Aorta (tissue), 5 donors: ENCODE measurements at regions of chr3 and their contacts with region 1.

Region 1: DNA sequence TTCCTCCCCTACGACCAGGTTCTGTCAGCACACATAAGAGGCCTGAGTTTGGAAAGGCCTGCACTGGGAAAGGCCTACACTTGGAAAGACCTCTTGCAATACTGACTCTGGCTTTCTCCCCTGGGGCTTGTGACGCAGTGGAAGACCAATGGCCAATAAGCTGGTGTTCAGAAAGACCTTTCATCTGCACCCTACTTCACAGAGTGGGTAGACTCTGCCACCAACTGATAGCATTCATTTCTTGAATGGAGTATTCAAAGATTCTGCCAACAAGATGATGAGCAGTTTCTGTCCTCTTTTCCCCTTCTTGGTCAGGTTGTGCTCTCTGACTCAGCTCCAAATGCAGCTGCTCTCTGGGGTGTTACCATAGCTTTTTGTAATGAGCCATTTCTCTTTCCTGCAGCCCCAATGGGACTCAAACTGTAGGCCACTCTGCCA is 48.8 kb downstream of the TIPARP start:
- DNase-seq: no peak
- ATAC-seq: peak; percentile 26
- H3K4me3 ChIP-seq: no peak overlapping the region
- H3K27ac ChIP-seq: no peak overlapping the region
- H3K4me1 ChIP-seq: no peaks in the 10 kb centered on the region
- H3K27me3 ChIP-seq: no peaks in the 10 kb centered on the region

Region 2: DNA sequence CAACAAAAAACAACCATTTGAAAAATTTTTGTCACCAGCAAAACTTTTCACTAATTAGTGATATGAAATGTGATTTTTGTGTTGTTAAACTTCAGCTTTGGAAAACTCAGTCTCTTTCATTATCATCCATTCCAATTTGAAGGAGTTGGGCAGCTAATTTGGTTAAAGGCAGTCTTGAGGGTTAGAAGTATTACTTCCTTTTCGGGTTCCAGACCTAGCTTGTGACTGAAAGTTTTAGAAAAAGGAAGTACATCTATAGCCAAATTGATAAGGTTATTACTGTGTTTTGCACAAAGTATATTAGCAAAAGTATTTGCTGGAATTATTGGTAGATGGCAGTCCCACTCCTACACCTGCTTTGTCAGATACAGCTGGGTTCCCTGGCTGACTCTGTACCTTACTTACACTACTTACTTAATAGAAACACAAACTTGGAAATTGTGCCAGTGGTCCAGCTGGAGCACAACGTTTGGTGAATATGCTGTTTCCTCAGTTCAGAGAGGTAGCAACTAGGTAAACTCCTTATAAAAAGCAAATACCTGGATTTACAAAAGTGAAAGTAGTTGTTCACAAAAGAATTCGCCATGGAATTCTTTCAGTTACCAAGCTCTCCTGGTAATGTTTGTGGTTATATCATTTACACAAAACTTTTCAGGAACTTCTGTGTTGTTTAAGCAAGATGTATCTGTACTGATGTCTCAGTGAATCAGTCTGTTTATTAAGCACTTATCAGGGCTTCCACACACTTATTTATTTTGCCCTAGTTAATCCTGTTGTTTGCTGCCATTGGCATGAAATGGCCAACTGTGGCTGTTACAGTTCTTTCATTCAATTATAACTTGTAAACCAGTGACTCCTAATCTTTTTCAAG is 17.2 kb before region 1 on chr3:
- intact Hi-C with region 1: loop called in 1 of 2 experiments (anchors 2 kb)
- DNase-seq: no peak
- ATAC-seq: no peak
- H3K4me3 ChIP-seq: no peak overlapping the region
- H3K27ac ChIP-seq: no peak overlapping the region
- H3K4me1 ChIP-seq: no peaks in the 10 kb centered on the region
- H3K27me3 ChIP-seq: no peaks in the 10 kb centered on the region

Region 3: GRCh38 chr3:157148196-157148889 is 425.1 kb after region 1 on chr3:
- intact Hi-C with region 1: no loop called
- DNase-seq: no peak
- ATAC-seq: no peak
- H3K4me3 ChIP-seq: no peak overlapping the region
- H3K27ac ChIP-seq: no peak overlapping the region
- H3K4me1 ChIP-seq: no peaks in the 10 kb centered on the region
- H3K27me3 ChIP-seq: no peaks in the 10 kb centered on the region